ENCODE measurements at regions of chr4 and their contacts with region 1.

Region 1: GRCh38 chr4:47933840-47934239 is 19.5 kb upstream of the NFXL1 start:
- DNase-seq: no peak
- ATAC-seq: no peak
- H3K4me3 ChIP-seq: no peak overlapping the region
- H3K27ac ChIP-seq: no peak overlapping the region
- H3K4me1 ChIP-seq: no peaks in the 10 kb centered on the region
- H3K27me3 ChIP-seq: peaks cover 0 to 5% (median 3%) of the 10 kb centered on the region in 3 donors
- CTCF ChIP-seq: peak; percentile 64

Region 2: GRCh38 chr4:47686294-47686872 is 247.5 kb before region 1 on chr4:
- intact Hi-C with region 1: loop called in 1 of 2 experiments (anchors 5 kb)
- DNase-seq: peak in 1 of 2 donors; percentile 18
- ATAC-seq: peak in 3 of 4 donors; percentile 51 to 75 (median 62)
- H3K4me3 ChIP-seq: no peak overlapping the region
- H3K27ac ChIP-seq: no peak overlapping the region
- H3K4me1 ChIP-seq: no peaks in the 10 kb centered on the region
- H3K27me3 ChIP-seq: no peaks in the 10 kb centered on the region
- CTCF ChIP-seq: peak; percentile 58

Measured in psoas muscle (tissue), 8 donors.